ENCODE measurements at regions of chr16 and their contacts with region 1.

Region 1: GRCh38 chr16:68528686-68529379 is 10.3 kb upstream of the ZFP90 start:
- DNase-seq: peak; percentile 80 to 90 (median 84)
- ATAC-seq: peak; percentile 84 to 94 (median 92)
- H3K4me3 ChIP-seq: peak overlapping the region in 6 of 12 donors; percentile 3 to 38 (median 22)
- H3K27ac ChIP-seq: no peak overlapping the region
- H3K4me1 ChIP-seq: peaks cover 0 to 23% (median 16%) of the 10 kb centered on the region in 12 donors
- H3K27me3 ChIP-seq: no peaks in the 10 kb centered on the region
- CTCF ChIP-seq: peak; percentile 88 to 96 (median 92)
- POLR2A ChIP-seq: no peak

Region 2: DNA sequence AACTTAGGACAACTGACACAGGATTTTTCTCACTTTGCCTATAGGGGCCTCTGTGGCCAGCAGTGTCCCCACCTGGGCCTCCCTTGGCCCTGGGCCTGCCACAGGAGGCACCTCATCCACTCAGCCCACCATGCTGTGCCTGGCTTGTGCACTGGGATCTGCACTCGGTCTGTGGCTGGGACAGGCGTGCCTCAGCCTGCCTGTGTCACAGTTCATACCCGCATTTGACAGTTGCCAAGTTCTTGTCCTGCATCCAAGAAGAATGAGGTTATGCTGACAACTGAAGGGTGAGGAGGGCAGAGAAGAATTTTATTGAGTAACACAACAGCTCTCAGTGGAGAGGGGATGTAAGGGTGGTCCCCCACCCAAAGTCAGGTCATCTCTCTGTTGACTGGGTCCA is 46.2 kb after region 1 on chr16:
- intact Hi-C with region 1: no loop called
- DNase-seq: no peak
- ATAC-seq: no peak
- H3K4me3 ChIP-seq: no peak overlapping the region
- H3K27ac ChIP-seq: no peak overlapping the region
- H3K4me1 ChIP-seq: no peaks in the 10 kb centered on the region
- H3K27me3 ChIP-seq: no peaks in the 10 kb centered on the region
- CTCF ChIP-seq: no peak
- POLR2A ChIP-seq: no peak

Region 3: DNA sequence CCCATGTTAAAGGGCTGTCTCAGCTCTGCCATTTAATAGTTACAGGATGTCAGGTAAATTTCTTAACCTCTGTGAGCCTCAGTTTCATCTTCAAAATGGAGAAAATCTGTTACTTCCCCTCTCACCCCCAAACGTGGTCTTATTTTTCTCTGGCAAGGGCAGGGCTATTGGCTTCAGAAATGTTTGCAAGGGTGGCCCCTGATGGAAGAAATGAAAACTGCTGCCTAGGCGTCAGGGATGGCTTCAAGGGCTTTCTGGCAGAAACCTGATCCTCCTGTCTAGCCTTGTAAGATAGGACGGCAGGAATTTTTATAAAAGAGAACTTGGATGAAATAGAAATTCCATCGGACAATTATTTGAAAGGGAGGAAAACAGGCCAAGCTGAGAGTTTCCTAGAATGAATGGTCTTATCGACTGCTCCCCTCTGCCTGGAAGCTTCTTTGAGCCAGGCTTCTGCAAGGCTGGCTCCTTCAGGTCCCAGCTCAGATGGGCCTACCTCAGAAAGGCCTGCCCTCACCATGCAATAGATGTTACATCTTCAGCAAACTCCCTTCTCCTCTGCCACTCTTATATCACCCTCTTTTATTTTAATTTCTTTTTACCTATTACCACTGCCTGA is 271.5 kb after region 1 on chr16:
- intact Hi-C with region 1: loop called in 5 of 10 experiments (anchors 2 to 10 kb)
- DNase-seq: peak in 3 of 5 donors; percentile 10 to 33 (median 23)
- ATAC-seq: peak in 3 of 4 donors; percentile 50 to 76 (median 70)
- H3K4me3 ChIP-seq: no peak overlapping the region
- H3K27ac ChIP-seq: no peak overlapping the region
- H3K4me1 ChIP-seq: no peaks in the 10 kb centered on the region
- H3K27me3 ChIP-seq: no peaks in the 10 kb centered on the region
- CTCF ChIP-seq: peak in 11 of 12 donors; percentile 28 to 73 (median 57)
- POLR2A ChIP-seq: no peak

Region 4: GRCh38 chr16:68843482-68844210 is 314.8 kb after region 1 on chr16 and contains the start of gene TANGO6:
- intact Hi-C with region 1: loop called in 7 of 10 experiments (anchors 2 to 10 kb)
- DNase-seq: peak; percentile 84 to 93 (median 89)
- ATAC-seq: peak; percentile 93 to 99 (median 99)
- H3K4me3 ChIP-seq: peak within 1 kb of the TSS; percentile 68 to 99 (median 84)
- H3K27ac ChIP-seq: peak within 1 kb of the TSS; percentile 68 to 93 (median 86)
- H3K4me1 ChIP-seq: peaks cover 0 to 20% (median 7%) of the 10 kb centered on the region in 12 donors
- H3K27me3 ChIP-seq: no peaks in the 10 kb centered on the region
- CTCF ChIP-seq: peak in 2 of 12 donors; percentile 17 to 21
- POLR2A ChIP-seq: peak in 1 of 2 donors; percentile 59
- total RNA-seq, gene TANGO6: 5.5 to 14.1 (median 8.9) TPM

Region 5: GRCh38 chr16:68848786-68849185 is 320.0 kb after region 1 on chr16:
- intact Hi-C with region 1: loop called in 7 of 10 experiments (anchors 2 to 10 kb)
- DNase-seq: no peak
- ATAC-seq: no peak
- H3K4me3 ChIP-seq: no peak overlapping the region
- H3K27ac ChIP-seq: no peak overlapping the region
- H3K4me1 ChIP-seq: peaks cover 0 to 15% (median 5%) of the 10 kb centered on the region in 12 donors
- H3K27me3 ChIP-seq: no peaks in the 10 kb centered on the region
- CTCF ChIP-seq: no peak
- POLR2A ChIP-seq: no peak

Region 6: DNA sequence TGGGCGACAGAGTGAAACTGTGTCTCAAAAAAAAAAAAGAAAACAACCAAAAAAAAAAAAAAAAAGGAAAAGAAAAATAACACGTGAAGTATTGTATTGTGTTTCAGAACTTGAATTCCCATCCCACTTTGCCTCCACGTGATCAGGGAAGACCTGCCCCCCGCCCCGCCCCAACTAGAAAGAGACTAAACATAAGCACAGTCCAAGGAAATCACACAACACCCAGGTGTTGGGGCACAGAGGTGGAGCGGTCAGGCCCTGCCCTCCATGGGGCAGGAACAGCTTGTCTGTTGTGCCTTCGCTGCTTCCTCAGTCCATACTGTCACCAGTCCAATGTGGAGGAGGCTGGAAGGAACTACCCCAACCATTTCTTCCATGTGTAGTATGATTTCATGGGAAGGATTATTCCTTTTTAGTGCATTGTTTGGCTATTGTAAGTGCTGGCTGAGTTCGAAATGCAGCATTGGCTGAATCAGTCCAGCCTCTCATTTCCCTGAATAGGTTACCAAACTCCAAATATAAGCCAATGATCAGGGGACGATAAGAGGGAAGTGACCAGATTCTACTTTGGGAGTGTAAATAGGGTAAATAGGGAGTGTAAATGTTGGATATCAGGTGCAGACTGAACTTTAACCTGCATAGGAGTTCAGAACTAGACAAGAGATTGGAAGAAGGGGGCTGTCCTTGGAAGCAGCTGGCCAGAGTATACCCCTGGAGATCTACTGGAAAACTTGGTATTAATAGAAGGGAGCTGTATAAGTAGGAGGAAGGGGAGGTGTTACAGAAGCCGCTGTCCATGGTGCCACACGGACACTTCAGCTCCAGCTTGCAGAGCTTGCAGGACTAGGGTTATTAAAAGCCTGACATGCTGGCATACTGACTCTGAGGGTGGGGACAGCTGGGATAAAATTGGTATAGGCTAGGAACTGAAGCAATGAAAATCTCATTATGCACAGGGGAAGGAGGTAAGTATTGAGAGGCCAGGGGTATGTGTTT is 365.2 kb after region 1 on chr16:
- intact Hi-C with region 1: loop called in 1 of 10 experiments (anchors 10 kb)
- DNase-seq: peak in 4 of 5 donors; percentile 24 to 59 (median 42)
- ATAC-seq: peak; percentile 77 to 97 (median 92)
- H3K4me3 ChIP-seq: no peak overlapping the region
- H3K27ac ChIP-seq: no peak overlapping the region
- H3K4me1 ChIP-seq: peaks cover 0 to 11% (median 0%) of the 10 kb centered on the region in 12 donors
- H3K27me3 ChIP-seq: no peaks in the 10 kb centered on the region
- CTCF ChIP-seq: no peak
- POLR2A ChIP-seq: no peak

Region 7: DNA sequence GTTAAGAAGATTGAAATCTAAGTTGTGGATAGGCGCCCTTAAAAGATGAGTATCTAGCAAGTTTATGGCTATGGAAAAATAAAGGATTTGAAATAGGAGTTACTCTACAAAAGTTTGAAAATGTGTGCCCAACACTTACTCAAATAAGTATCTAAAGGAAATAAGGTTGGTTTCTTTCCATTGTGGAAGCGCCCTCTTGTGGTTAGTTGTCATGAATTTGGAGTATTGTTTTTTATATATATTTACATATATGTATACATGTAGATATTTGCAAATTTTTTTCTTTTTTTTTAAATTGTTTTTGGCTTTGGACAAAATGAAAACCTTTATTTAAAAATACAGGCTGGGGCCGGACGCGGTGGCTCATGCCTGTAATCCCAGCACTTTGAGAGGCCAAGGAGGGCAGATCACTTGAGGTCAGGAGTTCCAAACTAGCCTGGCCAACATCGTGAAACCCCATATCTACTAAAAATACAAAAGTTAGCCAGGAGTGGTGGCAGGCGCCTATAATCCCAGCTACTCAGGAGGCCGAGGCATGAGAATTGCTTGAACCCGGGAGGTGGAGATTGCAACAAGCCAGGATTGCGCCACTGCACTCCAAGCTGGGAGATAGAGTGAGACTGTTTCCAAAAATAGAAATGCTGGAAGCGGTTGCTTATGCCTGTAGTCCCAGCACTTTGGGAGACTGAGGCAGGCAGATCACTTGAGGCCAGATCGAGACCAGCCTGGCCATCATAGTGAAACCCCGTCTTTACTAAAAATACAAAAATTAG is 758.3 kb after region 1 on chr16:
- intact Hi-C with region 1: loop called in 2 of 10 experiments (anchors 5 to 10 kb)
- DNase-seq: peak in 3 of 5 donors; percentile 22 to 69 (median 53)
- ATAC-seq: peak; percentile 54 to 87 (median 81)
- H3K4me3 ChIP-seq: no peak overlapping the region
- H3K27ac ChIP-seq: no peak overlapping the region
- H3K4me1 ChIP-seq: peaks cover 0 to 14% (median 6%) of the 10 kb centered on the region in 12 donors
- H3K27me3 ChIP-seq: no peaks in the 10 kb centered on the region
- CTCF ChIP-seq: peak; percentile 57 to 83 (median 72)
- POLR2A ChIP-seq: no peak